Caco-2 (cell line): ENCODE measurements at regions of chr4 and their contacts with region 1.

Region 1: GRCh38 chr4:46793036-46793435 is 116.0 kb downstream of the COX7B2 start:
- DNase-seq: peak; percentile 93 to 96
- H3K4me3 ChIP-seq: no peak overlapping the region
- H3K4me3 Mint-ChIP-seq: peak overlapping the region; percentile 36
- H3K27ac Mint-ChIP-seq: peak overlapping the region; percentile 74
- H3K4me1 ChIP-seq: peaks cover 26% of the 10 kb centered on the region
- H3K4me1 Mint-ChIP-seq: peaks cover 23% of the 10 kb centered on the region
- H3K27me3 ChIP-seq: no peaks in the 10 kb centered on the region
- H3K27me3 Mint-ChIP-seq: no peaks in the 10 kb centered on the region
- CTCF ChIP-seq: no peak

Region 2: DNA sequence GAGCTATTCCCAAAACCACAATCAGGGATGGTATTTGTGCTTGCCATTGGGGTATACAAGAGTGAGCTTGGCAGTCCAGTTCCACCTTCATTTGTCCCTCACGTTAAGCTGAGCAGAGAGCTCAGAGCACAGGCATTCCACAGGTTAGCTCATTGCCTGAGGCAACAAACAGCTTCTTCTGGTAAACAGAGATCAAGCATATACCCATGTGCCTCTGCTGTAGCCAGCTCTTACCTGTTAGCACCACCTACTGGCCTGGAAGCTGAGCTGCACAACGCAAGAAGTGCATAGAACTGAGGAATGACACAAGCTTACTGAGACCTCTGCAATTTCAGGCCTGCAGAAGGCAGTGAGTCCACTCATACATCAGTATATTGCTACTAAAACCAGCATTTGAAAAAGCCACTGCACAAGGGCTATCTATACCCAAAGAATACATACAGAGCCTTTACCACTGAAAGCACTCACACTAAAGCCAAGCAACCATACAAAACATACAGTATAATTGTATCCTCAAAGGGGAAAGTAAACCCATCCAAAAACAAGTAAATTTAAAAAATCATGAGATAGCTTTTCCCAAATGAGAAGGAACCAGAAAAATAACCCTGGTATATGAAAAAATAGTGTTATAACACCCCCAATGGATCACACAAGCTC is 144.8 kb before region 1 on chr4:
- CTCF ChIA-PET with region 1: no interaction called
- POLR2A ChIA-PET with region 1: no interaction called
- intact Hi-C with region 1: loop called (anchors 1 kb)
- DNase-seq: peak; percentile 80 to 82
- H3K4me3 ChIP-seq: no peak overlapping the region
- H3K4me3 Mint-ChIP-seq: no peak overlapping the region
- H3K27ac Mint-ChIP-seq: peak overlapping the region; percentile 71
- H3K4me1 ChIP-seq: peaks cover 7% of the 10 kb centered on the region
- H3K4me1 Mint-ChIP-seq: no peaks in the 10 kb centered on the region
- H3K27me3 ChIP-seq: no peaks in the 10 kb centered on the region
- H3K27me3 Mint-ChIP-seq: no peaks in the 10 kb centered on the region
- CTCF ChIP-seq: peak; percentile 73 to 78

Region 3: DNA sequence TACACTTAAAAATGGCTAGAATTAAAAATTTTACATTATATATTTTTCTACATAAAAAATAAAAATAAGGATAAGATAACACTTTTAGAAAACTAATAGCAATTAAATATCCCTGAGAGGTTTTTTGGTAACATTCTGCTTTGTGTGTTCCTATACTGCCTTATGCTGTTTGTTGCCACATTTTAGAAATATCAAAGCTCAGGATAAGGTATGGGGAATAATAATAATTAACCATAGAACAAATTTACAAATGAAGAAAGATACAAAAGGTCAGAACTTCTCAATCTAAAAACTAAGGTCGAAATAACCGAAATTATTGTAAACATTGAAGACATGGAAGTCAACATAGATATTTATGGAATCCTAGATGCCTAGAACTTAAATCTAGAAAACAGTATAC is 44.6 kb after region 1 on chr4:
- CTCF ChIA-PET with region 1: no interaction called
- POLR2A ChIA-PET with region 1: no interaction called
- intact Hi-C with region 1: loop called (anchors 1 kb)
- DNase-seq: no peak
- H3K4me3 ChIP-seq: no peak overlapping the region
- H3K4me3 Mint-ChIP-seq: peak overlapping the region; percentile 48
- H3K27ac Mint-ChIP-seq: no peak overlapping the region
- H3K4me1 ChIP-seq: peaks cover 23% of the 10 kb centered on the region
- H3K4me1 Mint-ChIP-seq: peaks cover 35% of the 10 kb centered on the region
- H3K27me3 ChIP-seq: no peaks in the 10 kb centered on the region
- H3K27me3 Mint-ChIP-seq: no peaks in the 10 kb centered on the region
- CTCF ChIP-seq: no peak

Region 4: DNA sequence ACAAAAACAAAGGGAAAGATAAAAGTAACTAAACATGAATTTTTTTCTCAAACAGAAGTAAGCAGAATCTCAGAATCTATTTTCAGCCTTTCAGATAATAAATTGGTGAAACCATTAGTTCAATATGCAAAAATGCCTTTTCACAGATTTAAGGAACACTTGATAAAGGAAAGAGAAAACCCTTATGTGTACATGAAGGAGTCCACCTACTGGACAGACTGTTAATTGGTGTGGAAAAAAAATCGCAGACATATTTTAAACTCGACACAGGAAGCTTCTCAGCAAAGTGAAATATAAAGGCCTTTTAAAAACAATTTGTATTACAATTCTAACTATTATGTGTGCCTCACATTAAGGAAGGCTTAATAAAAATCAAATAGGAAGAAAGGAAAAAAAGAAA is 93.7 kb after region 1 on chr4:
- CTCF ChIA-PET with region 1: no interaction called
- POLR2A ChIA-PET with region 1: no interaction called
- intact Hi-C with region 1: loop called (anchors 1 kb)
- DNase-seq: peak in 1 of 2 experiments; percentile 32
- H3K4me3 ChIP-seq: no peak overlapping the region
- H3K4me3 Mint-ChIP-seq: no peak overlapping the region
- H3K27ac Mint-ChIP-seq: peak overlapping the region; percentile 72
- H3K4me1 ChIP-seq: peaks cover 49% of the 10 kb centered on the region
- H3K4me1 Mint-ChIP-seq: peaks cover 29% of the 10 kb centered on the region
- H3K27me3 ChIP-seq: no peaks in the 10 kb centered on the region
- H3K27me3 Mint-ChIP-seq: no peaks in the 10 kb centered on the region
- CTCF ChIP-seq: peak; percentile 29 to 32

Region 5: DNA sequence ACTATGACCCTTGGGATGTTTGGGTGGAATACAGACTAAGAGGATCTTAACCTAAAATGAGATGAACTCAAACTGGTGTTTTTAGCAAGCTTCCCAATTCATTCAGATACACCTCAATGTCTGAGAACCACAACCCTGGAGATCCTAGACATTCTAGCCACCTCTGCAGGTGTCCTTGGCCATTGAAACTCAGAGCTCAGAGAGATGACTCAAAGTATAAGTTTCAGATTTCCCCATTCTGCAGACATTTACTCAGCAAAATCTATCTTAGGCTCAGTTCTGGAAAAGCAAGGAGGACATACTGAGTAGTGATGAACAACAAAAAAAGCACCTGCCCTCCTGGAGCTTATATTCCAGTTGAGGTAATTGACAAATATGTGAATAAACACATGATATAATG is 622.7 kb after region 1 on chr4:
- CTCF ChIA-PET with region 1: no interaction called
- POLR2A ChIA-PET with region 1: no interaction called
- intact Hi-C with region 1: loop called (anchors 5 kb)
- DNase-seq: no peak
- H3K4me3 ChIP-seq: no peak overlapping the region
- H3K4me3 Mint-ChIP-seq: no peak overlapping the region
- H3K27ac Mint-ChIP-seq: no peak overlapping the region
- H3K4me1 ChIP-seq: peaks cover 37% of the 10 kb centered on the region
- H3K4me1 Mint-ChIP-seq: peaks cover 11% of the 10 kb centered on the region
- H3K27me3 ChIP-seq: no peaks in the 10 kb centered on the region
- H3K27me3 Mint-ChIP-seq: no peaks in the 10 kb centered on the region
- CTCF ChIP-seq: no peak